ENCODE measurements at regions of chr3 and their contacts with region 1.

Region 1: GRCh38 chr3:108662130-108662738 is 72.7 kb downstream of the DZIP3 start:
- DNase-seq: peak; percentile 60
- H3K4me3 Mint-ChIP-seq: no peak overlapping the region
- H3K27ac Mint-ChIP-seq: no peak overlapping the region
- H3K4me1 Mint-ChIP-seq: no peaks in the 10 kb centered on the region
- H3K27me3 Mint-ChIP-seq: no peaks in the 10 kb centered on the region
- CTCF ChIP-seq: peak; percentile 23

Region 2: GRCh38 chr3:108608750-108609149 is 53.5 kb before region 1 on chr3:
- CTCF ChIA-PET with region 1: no interaction called
- intact Hi-C with region 1: no loop called
- DNase-seq: no peak
- H3K4me3 Mint-ChIP-seq: no peak overlapping the region
- H3K27ac Mint-ChIP-seq: no peak overlapping the region
- H3K4me1 Mint-ChIP-seq: peaks cover 3% of the 10 kb centered on the region
- H3K27me3 Mint-ChIP-seq: no peaks in the 10 kb centered on the region
- CTCF ChIP-seq: no peak

Region 3: DNA sequence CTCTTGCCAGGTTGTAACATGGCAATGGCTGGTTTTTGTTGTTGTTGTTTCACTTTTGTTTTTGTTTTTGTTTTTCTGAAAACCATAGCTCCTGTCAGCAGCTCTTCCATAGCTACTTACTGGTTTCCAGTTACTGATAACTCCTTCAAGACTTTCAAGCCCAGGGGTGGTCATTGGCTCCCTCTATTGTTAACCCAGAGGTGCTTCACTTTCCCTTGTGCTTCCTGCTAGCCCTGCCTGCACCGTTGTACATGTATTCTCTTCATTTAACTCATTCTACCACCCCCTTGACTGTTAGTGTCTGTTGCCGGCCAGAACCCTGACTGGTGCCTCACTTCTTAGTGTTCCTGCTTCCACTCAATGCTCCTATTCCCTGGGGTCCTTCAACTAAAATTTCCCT is 156.2 kb after region 1 on chr3:
- CTCF ChIA-PET with region 1: interaction called, 6 read pairs
- intact Hi-C with region 1: loop called (anchors 1 kb)
- DNase-seq: peak; percentile 53
- H3K4me3 Mint-ChIP-seq: no peak overlapping the region
- H3K27ac Mint-ChIP-seq: no peak overlapping the region
- H3K4me1 Mint-ChIP-seq: peaks cover 7% of the 10 kb centered on the region
- H3K27me3 Mint-ChIP-seq: no peaks in the 10 kb centered on the region
- CTCF ChIP-seq: peak; percentile 15

Region 4: DNA sequence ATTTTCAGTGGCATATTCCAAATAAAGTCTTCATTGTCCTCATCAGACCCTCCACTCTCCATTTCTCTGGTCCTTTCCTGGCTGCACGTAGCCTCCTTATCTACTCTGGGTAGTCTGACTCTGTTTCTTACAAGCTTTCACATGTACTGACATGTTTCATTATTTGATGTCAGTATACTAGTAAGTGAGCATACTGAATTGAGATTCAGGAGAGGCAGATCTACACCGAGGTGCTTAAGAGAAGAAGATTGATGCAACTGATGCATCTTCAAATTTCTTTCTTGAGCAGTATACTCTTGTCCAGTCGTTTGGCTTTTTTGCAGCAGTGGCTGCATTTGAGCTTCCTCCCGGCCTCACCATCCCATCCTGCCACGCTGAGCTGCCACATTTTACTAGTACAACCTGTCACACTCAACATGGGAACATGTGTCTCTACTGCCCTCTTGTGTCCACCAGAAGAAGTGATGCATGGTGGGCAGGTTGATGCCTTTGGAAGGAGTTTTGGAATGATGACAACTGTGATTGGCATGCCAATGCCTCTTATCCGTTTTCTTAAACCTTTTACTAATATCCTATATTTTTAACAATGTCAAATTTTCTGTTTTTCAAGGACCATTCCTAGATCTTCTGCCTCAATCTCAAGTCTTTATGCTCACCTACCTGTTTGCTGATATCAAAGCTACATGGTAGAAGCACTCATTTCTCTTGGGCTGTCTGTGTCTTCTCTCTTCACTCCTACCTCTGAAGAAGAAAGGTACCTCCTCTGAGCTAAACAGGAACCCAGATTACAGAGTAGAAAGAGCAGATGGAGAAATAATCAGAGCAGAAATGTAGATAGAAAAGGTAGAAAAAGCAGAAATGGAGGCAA is 252.8 kb after region 1 on chr3:
- CTCF ChIA-PET with region 1: interaction called, 10 read pairs
- intact Hi-C with region 1: loop called (anchors 1 kb)
- DNase-seq: peak; percentile 60
- H3K4me3 Mint-ChIP-seq: no peak overlapping the region
- H3K27ac Mint-ChIP-seq: no peak overlapping the region
- H3K4me1 Mint-ChIP-seq: peaks cover 31% of the 10 kb centered on the region
- H3K27me3 Mint-ChIP-seq: peaks cover 10% of the 10 kb centered on the region
- CTCF ChIP-seq: peak; percentile 67

Region 5: GRCh38 chr3:109023656-109024254 is 361.5 kb after region 1 on chr3:
- CTCF ChIA-PET with region 1: no interaction called
- intact Hi-C with region 1: loop called (anchors 10 kb)
- DNase-seq: peak; percentile 49
- H3K4me3 Mint-ChIP-seq: no peak overlapping the region
- H3K27ac Mint-ChIP-seq: no peak overlapping the region
- H3K4me1 Mint-ChIP-seq: no peaks in the 10 kb centered on the region
- H3K27me3 Mint-ChIP-seq: peaks cover 8% of the 10 kb centered on the region
- CTCF ChIP-seq: no peak

Measured in Calu3 (cell line).